ENCODE measurements at regions of chr4 and their contacts with region 1.

Region 1: GRCh38 chr4:53161787-53162433 is 204.0 kb downstream of the SCFD2 start:
- DNase-seq: no peak
- CTCF ChIP-seq: no peak

Region 2: DNA sequence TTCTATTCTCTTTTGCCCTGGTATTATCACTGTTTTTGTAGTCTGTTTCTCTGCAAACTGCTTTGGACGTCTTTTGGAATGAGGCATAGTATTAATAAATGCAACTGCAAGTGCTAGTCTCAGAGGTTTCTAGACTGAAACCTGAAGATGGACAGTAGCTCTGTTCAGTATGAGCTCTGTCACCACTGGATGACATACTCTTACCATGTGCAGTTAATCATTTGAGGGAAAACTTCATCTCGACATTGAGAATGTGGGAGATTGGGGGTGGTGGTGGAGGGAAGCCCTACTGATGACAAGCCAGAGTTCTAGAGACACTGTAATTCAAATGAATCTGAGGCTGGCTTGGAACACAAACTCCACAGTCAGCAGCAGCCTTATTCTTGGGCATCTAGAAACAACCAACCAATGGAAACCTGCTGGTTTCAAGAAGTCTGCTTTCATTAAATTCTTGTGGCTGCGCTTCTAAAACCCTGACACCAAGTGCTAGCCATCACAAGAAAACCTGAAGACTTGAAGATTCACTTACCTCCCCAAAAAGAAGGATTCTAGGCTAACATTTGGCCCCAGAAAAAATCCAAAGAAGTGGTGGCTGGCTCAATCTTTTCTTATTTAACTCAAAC is 138.1 kb before region 1 on chr4:
- CTCF ChIA-PET with region 1: no interaction called
- POLR2A ChIA-PET with region 1: no interaction called
- DNase-seq: no peak
- CTCF ChIP-seq: no peak

Region 3: GRCh38 chr4:53150631-53151488 is 11.1 kb before region 1 on chr4:
- CTCF ChIA-PET with region 1: interaction called, 10 read pairs
- POLR2A ChIA-PET with region 1: no interaction called
- DNase-seq: no peak
- CTCF ChIP-seq: no peak

Region 4: GRCh38 chr4:53185869-53186585 is 24.1 kb after region 1 on chr4:
- CTCF ChIA-PET with region 1: no interaction called
- POLR2A ChIA-PET with region 1: no interaction called
- DNase-seq: no peak
- CTCF ChIP-seq: no peak

Measured in GM10248 (cell line).